ENCODE measurements at regions of chr20 and their contacts with region 1.

Region 1: DNA sequence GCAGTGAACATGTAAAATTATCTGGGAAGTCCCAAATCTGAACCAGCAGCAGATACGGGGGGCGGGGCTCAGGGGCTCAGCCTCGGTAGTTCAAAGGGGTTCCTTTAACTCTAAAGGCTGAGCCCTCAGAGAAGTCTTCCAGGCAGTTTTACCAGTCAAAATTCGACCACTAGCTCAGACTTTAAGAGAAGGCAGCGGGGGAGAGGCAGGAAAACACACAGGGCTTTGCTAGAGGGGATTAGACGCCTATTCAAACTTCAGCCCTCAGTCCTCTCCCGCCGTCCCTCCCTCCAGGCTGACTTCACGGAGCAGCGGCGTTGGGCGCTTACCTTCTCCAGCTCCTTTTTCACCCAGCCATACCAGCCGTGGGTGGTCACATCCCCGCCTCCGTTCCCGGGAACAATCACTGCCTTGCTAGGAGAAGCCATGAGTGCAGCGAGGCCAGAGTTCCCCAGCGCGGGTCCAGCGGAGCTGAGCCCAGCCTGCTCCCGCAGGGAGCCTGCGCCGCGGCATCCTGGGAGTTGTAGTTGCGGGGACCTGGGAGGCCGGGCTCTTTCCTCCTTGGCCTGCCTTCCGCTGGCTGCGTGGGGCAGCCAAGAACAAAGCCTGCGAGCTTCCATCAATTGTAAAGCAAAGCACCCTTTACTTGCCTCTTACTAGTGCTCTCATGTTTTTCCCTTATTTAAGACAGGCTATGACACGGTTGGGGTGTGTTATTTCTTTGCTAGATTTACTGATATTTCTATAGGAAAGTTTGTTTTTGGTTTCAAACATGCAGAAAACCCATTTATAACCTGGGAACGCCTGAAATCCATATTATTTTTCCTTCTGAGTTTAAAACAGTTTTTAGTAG is at the start of gene RBBP9:
- DNase-seq: peak; percentile 36
- H3K4me3 ChIP-seq: peak within 1 kb of the TSS; percentile 93
- H3K27ac ChIP-seq: peak within 1 kb of the TSS; percentile 24
- H3K27me3 ChIP-seq: no peaks in the 10 kb centered on the region
- CTCF ChIP-seq: no peak
- polyA plus RNA-seq, gene RBBP9: 14.5 and 19.7 TPM in 2 replicates

Region 2: GRCh38 chr20:18466894-18467730 is 29.9 kb before region 1 on chr20 and contains the starts of genes DZANK1 and POLR3F:
- CTCF ChIA-PET with region 1: interaction called, 5 read pairs
- POLR2A ChIA-PET with region 1: interaction called, 13 read pairs
- DNase-seq: peak; percentile 90
- H3K4me3 ChIP-seq: peak within 1 kb of the TSS; percentile 88
- H3K27ac ChIP-seq: peak within 1 kb of the TSS; percentile 94
- H3K27me3 ChIP-seq: no peaks in the 10 kb centered on the region
- CTCF ChIP-seq: no peak
- polyA plus RNA-seq, gene DZANK1: 1.8 TPM in 2 replicates
- polyA plus RNA-seq, gene POLR3F: 7.2 and 10.6 TPM in 2 replicates